K562 (cell line): ENCODE measurements at regions of chr4 and their contacts with region 1.

Region 1: DNA sequence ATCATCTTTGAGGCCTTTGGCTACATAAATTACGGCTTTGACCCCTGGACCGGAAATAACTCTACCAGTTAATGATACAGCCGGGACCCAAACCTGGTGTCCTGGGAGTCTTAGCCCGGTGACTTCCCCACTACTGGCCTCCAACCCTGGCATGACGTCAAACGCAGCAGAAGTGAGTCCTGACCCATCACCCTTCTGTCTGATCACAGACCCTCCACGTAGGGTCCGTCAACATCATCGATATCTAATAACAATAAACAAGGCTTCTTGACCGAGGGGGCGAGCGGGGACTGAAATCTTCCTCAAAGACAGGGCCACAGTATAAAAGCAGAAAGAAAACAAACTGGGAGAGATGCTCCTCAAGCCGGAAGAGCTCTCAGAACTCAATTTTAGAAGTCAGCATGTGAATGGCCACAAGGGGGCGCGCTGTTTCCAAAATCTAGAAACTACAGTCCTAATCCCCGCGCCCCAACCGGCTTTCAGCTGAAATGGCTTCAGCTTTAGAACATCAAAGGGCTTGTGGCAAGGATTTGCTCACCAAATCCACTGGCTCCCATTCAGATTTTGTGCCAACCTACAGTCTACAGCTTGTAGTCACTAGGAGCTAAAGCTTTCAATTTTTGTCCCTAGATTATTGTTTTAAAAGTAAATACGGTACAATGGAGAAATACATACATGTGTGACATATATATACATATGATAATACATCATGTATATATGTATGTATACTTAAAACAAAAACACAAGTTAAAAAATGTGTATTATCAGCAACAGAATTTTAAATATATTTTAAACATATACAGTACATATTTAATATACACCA is 46.4 kb upstream of the ENPP6 start:
- DNase-seq: peak; percentile 75 to 95 (median 78)
- ATAC-seq: peak; percentile 71
- H3K4me3 ChIP-seq: no peak overlapping the region
- H3K27ac ChIP-seq: no peak overlapping the region
- H3K4me1 ChIP-seq: peaks cover 0 to 24% of the 10 kb centered on the region in 2 experiments; a peak in 3 of 5 replicates
- H3K27me3 ChIP-seq: peaks cover 0 to 3% of the 10 kb centered on the region in 2 experiments; a peak in 2 of 5 replicates
- CTCF ChIP-seq: peak; percentile 87 to 97 (median 93)
- EP300 ChIP-seq: 0 out of 2 replicates have a peak, but pooled peaks have one; percentile 22
- POLR2A ChIP-seq: no peak
- RAD21 ChIP-seq: peak; percentile 85 to 86

Region 2: GRCh38 chr4:184347251-184348239 is 83.4 kb after region 1 on chr4:
- CTCF ChIA-PET with region 1: no interaction called
- POLR2A ChIA-PET with region 1: no interaction called
- in situ Hi-C with region 1: no loop called
- intact Hi-C with region 1: loop called (anchors 5 kb)
- DNase-seq: peak; percentile 58 to 82 (median 68)
- ATAC-seq: peak; percentile 87
- H3K4me3 ChIP-seq: no peak overlapping the region
- H3K27ac ChIP-seq: peak overlapping the region; percentile 50
- H3K4me1 ChIP-seq: peaks cover 30 to 34% of the 10 kb centered on the region in 2 experiments
- H3K27me3 ChIP-seq: no peaks in the 10 kb centered on the region
- CTCF ChIP-seq: no peak
- EP300 ChIP-seq: no peak
- POLR2A ChIP-seq: no peak; the same call in 1 of the 2 replicates
- RAD21 ChIP-seq: no peak

Region 3: DNA sequence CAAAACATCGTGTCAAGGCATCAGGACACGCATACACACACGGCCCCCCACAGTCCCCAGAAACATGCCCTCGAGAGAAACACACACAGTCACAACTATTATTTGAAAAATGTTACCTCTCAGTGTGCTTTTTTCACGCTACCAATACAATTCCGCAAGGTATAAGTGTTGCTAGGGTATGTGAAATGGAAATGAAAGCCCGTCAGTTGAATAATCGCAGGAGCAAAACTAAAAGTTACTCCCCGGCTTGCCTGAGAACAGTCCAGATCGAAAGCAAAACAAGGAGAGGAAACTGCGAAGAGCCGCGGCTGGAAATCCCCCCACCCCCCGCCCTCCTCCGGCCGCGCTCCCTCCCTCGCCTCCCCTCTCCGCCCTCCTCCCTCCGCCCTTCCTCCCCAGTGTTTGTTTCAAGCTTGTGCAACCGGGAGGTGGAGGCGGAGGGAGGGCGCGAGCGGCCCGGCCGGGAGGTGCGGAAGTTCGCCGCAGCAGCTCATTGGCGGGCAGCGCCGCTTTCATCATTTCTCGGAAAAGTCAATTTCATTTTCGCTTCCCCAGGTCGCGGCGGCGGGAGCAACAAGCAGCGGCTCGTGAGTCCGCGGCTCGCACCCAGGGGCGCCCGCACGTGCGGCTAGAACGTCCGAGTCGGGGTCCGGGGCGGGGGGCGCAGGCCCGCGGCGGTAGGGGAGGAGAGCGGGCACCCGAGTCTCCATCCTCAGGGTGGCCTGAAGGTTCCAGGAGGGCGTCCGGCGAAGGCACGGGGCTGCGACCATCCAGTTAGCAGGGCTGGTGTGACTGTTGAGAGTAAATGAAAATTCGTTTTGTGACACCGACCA is 210.4 kb after region 1 on chr4 and contains the start of gene IRF2:
- CTCF ChIA-PET with region 1: no interaction called
- POLR2A ChIA-PET with region 1: interaction called, 3 read pairs
- in situ Hi-C with region 1: no loop called
- intact Hi-C with region 1: loop called (anchors 2 kb)
- DNase-seq: peak; percentile 94 to 97 (median 96)
- ATAC-seq: peak; percentile 87
- H3K4me3 ChIP-seq: peak within 1 kb of the TSS; percentile 92
- H3K27ac ChIP-seq: peak within 1 kb of the TSS; percentile 93
- H3K4me1 ChIP-seq: peaks cover 21 to 23% of the 10 kb centered on the region in 2 experiments
- H3K27me3 ChIP-seq: no peaks in the 10 kb centered on the region
- CTCF ChIP-seq: peak in 2 of 3 experiments; percentile 5 to 8; a peak in 1 of 6 replicates
- EP300 ChIP-seq: peak; percentile 50
- POLR2A ChIP-seq: peak; percentile 91
- RAD21 ChIP-seq: no peak
- polyA plus RNA-seq, gene IRF2: 8.8 to 17.1 TPM

Region 4: GRCh38 chr4:184538023-184538599 is 274.0 kb after region 1 on chr4:
- CTCF ChIA-PET with region 1: interaction called, 31 read pairs
- POLR2A ChIA-PET with region 1: interaction called, 6 read pairs
- in situ Hi-C with region 1: loop called (anchors 5 kb)
- intact Hi-C with region 1: loop called (anchors 1 kb)
- DNase-seq: peak; percentile 80 to 94 (median 84)
- ATAC-seq: peak; percentile 93
- H3K4me3 ChIP-seq: peak overlapping the region; percentile 66
- H3K27ac ChIP-seq: peak overlapping the region; percentile 88
- H3K4me1 ChIP-seq: peaks cover 4 to 21% of the 10 kb centered on the region in 2 experiments
- H3K27me3 ChIP-seq: no peaks in the 10 kb centered on the region
- CTCF ChIP-seq: peak; percentile 85 to 93 (median 86)
- EP300 ChIP-seq: no peak
- POLR2A ChIP-seq: no peak
- RAD21 ChIP-seq: peak; percentile 91 to 95

Region 5: DNA sequence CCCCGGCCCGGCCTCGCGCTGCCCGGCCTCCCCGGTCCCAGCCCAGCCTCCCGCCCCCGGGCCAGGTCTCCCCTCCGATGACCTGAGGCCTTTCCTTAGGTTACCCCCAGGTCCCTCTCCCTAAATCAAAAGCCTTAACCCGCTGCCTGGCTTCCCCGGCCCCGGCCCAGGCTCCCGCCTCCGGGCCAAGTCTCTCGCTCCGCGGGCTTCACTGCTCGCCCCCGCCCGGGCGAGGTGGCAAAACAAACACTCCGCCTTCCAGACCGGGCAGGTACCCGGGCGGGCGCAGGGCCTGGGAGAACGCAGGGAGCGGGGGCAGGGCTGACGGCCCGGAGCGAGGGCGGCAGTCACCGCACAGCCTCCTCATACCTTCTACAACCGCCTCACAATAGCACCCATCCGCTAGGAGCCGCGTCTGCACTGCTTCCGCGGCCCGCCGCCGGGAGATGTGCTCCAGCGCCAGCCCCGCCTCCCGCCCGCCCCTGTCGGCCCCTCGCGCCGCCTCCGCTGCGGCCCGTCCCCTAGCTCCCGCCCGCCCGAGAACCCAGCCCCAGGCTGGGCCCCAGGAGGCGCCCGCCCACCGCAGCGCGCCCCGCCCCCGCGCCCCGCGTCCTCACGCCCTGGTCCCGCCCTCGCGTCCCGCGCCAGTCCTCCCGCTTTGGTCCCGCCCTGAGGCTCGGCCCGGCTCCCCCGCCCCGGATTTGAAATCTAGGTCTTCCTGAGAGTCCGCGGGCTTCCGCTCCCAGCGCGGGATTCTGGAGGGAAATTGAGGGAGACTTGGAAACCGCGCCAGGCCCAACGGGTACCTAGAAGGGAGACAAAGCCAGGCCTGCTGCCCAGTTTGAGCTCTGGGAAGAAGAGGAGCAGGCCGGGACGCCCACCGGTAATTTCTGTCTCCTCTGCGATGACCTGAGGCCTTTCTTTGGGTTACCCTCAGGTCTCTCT is 385.2 kb after region 1 on chr4 and contains the starts of genes CASP3 and PRIMPOL:
- CTCF ChIA-PET with region 1: no interaction called
- POLR2A ChIA-PET with region 1: interaction called, 4 read pairs
- in situ Hi-C with region 1: no loop called
- intact Hi-C with region 1: loop called (anchors 5 kb)
- DNase-seq: peak; percentile 91 to 98 (median 92)
- ATAC-seq: peak; percentile 92
- H3K4me3 ChIP-seq: peak within 1 kb of the TSS; percentile 96
- H3K27ac ChIP-seq: peak within 1 kb of the TSS; percentile 89
- H3K4me1 ChIP-seq: peaks cover 17 to 19% of the 10 kb centered on the region in 2 experiments
- H3K27me3 ChIP-seq: no peaks in the 10 kb centered on the region
- CTCF ChIP-seq: peak in 2 of 3 experiments; percentile 59 to 64; a peak in 4 of 6 replicates
- EP300 ChIP-seq: no peak
- POLR2A ChIP-seq: peak; percentile 84
- RAD21 ChIP-seq: peak; percentile 47
- polyA plus RNA-seq, gene CASP3: 17.6 to 39.3 TPM
- polyA plus RNA-seq, gene PRIMPOL: 11.0 to 14.2 TPM

Region 6: GRCh38 chr4:184733654-184734524 is 469.8 kb after region 1 on chr4 and contains the start of gene CENPU:
- CTCF ChIA-PET with region 1: no interaction called
- POLR2A ChIA-PET with region 1: interaction called, 3 read pairs
- in situ Hi-C with region 1: no loop called
- intact Hi-C with region 1: loop called (anchors 10 kb)
- DNase-seq: peak; percentile 99 to 100 (median 100)
- ATAC-seq: peak; percentile 96
- H3K4me3 ChIP-seq: peak within 1 kb of the TSS; percentile 78
- H3K27ac ChIP-seq: peak within 1 kb of the TSS; percentile 84
- H3K4me1 ChIP-seq: peaks cover 0 to 8% of the 10 kb centered on the region in 2 experiments; a peak in 1 of 5 replicates
- H3K27me3 ChIP-seq: no peaks in the 10 kb centered on the region
- CTCF ChIP-seq: no peak
- EP300 ChIP-seq: peak; percentile 67
- POLR2A ChIP-seq: peak; percentile 93
- RAD21 ChIP-seq: no peak
- polyA plus RNA-seq, gene CENPU: 39.4 to 53.7 TPM